ENCODE measurements at regions of chr3 and their contacts with region 1.

Region 1: GRCh38 chr3:183447206-183448001 is 19.0 kb upstream of the MCF2L2 start:
- DNase-seq: peak; percentile 91 to 98 (median 92)
- ATAC-seq: peak; percentile 92
- H3K4me3 ChIP-seq: peak overlapping the region; percentile 76
- H3K27ac ChIP-seq: peak overlapping the region; percentile 88
- H3K4me1 ChIP-seq: peaks cover 0 to 7% of the 10 kb centered on the region in 2 experiments; a peak in 2 of 5 replicates
- H3K27me3 ChIP-seq: no peaks in the 10 kb centered on the region
- CTCF ChIP-seq: peak in 1 of 3 experiments; percentile 1; a peak in 2 of 6 replicates
- EP300 ChIP-seq: 0 out of 2 replicates have a peak, but pooled peaks have one; percentile 24
- POLR2A ChIP-seq: peak; percentile 97
- RAD21 ChIP-seq: no peak; a peak in 1 of 4 replicates

Region 2: GRCh38 chr3:181623924-181624694 is 1823.3 kb before region 1 on chr3:
- CTCF ChIA-PET with region 1: no interaction called
- POLR2A ChIA-PET with region 1: no interaction called
- in situ Hi-C with region 1: no loop called
- intact Hi-C with region 1: no loop called
- DNase-seq: no peak
- ATAC-seq: no peak
- H3K4me3 ChIP-seq: no peak overlapping the region
- H3K27ac ChIP-seq: no peak overlapping the region
- H3K4me1 ChIP-seq: no peaks in the 10 kb centered on the region
- H3K27me3 ChIP-seq: no peaks in the 10 kb centered on the region
- CTCF ChIP-seq: no peak
- EP300 ChIP-seq: no peak
- POLR2A ChIP-seq: no peak
- RAD21 ChIP-seq: no peak

Region 3: DNA sequence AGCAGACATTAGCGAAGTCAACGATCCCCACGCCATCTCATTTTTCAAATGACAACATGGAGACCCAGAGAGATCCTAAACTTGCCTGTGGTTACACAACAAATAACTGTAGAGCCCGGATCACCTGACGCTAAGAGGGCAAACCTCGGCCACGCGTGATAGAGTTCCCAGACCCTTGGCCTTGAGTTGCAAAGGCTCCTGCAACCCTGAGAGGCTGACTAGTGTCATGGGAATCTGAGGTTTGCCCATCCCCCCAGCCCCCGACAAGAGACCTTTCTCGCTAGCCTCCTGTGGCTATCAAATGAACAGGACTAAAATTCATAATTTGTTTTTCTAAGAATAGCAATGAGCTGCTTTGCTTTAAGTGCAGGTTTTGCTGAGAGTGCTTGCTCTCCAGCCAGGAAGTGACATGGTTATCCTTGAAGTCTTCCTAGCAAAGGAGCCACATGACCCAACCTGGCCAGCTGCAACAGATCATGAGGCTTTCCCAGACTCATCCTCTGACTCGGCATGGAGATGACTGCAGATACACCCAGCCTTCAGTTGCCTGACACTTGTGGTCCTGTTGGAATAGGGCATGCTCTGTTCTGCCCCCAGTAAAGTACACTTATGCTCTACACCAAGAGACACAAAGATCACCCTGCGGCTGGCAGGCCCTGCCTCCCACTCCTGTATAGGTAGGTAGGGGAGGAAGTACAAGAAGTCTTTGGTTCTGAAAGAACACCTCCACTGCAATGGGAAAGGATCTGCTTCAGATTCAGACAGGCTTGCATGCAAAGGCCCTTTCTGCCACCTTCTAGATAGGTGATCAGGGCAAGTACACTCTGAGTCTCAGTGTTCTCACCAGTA is 55.0 kb before region 1 on chr3:
- CTCF ChIA-PET with region 1: no interaction called
- POLR2A ChIA-PET with region 1: no interaction called
- in situ Hi-C with region 1: no loop called
- intact Hi-C with region 1: loop called (anchors 5 kb)
- DNase-seq: no peak
- ATAC-seq: peak; percentile 46; the same call in 2 of the 3 replicates
- H3K4me3 ChIP-seq: no peak overlapping the region
- H3K27ac ChIP-seq: no peak overlapping the region
- H3K4me1 ChIP-seq: peaks cover 0 to 14% of the 10 kb centered on the region in 2 experiments; a peak in 2 of 5 replicates
- H3K27me3 ChIP-seq: no peaks in the 10 kb centered on the region
- CTCF ChIP-seq: no peak
- EP300 ChIP-seq: no peak
- POLR2A ChIP-seq: no peak
- RAD21 ChIP-seq: no peak

Region 4: GRCh38 chr3:183410280-183410679 is 37.1 kb before region 1 on chr3:
- CTCF ChIA-PET with region 1: no interaction called
- POLR2A ChIA-PET with region 1: interaction called, 4 read pairs
- in situ Hi-C with region 1: no loop called
- intact Hi-C with region 1: loop called (anchors 5 kb)
- DNase-seq: peak; percentile 38 to 91 (median 70)
- ATAC-seq: peak; percentile 95
- H3K4me3 ChIP-seq: no peak overlapping the region
- H3K27ac ChIP-seq: peak overlapping the region; percentile 43; the same call in 1 of the 3 replicates
- H3K4me1 ChIP-seq: peaks cover 13 to 31% of the 10 kb centered on the region in 2 experiments; a peak in 4 of 5 replicates
- H3K27me3 ChIP-seq: no peaks in the 10 kb centered on the region
- CTCF ChIP-seq: no peak
- EP300 ChIP-seq: peak; percentile 87
- POLR2A ChIP-seq: no peak
- RAD21 ChIP-seq: no peak

Measured in K562 (cell line).